Ascending aorta (tissue), 2 donors: ENCODE measurements at regions of chr6 and their contacts with region 1.

Region 1: GRCh38 chr6:139375232-139376016 is 976 bp upstream of the CITED2 start:
- DNase-seq: peak; percentile 46 to 91
- H3K4me3 ChIP-seq: peak overlapping the region; percentile 69 to 75
- H3K27ac ChIP-seq: peak overlapping the region; percentile 92 to 93
- H3K4me1 ChIP-seq: peaks cover 0 to 13% of the 10 kb centered on the region in 2 donors
- H3K27me3 ChIP-seq: no peaks in the 10 kb centered on the region
- CTCF ChIP-seq: peak in 1 of 3 experiments; percentile 20

Region 2: DNA sequence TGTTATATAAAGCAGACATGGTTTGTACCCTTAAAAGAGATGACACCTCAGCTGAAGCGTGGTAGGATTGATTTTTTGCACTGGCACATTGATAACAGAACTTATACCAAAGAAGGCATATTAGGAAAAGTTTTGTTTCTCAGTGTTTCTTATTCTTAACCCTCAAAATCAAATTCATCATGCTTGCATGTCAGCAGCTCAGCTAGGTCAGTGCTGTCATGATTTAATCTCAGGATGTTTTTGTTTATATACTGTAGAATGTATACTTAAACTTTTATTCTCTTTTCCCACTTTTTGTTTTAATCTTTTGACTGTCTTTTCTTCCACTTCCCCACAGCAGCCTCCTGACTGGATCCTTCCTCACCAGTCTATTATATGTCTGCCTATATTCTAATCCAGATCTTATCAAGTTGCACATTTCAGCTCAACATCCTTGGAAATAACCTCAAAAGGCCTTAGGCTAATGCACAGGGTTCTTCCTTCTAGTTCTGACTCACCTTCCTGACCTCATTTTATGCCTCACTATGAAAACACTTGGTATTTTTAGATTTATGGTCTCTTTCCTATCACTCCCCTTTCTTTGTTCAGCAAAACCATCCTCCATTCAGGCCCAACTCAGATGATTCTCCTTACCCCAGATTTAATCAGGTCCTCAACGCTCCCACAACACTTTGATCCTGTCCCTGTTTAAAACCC is 964.3 kb before region 1 on chr6:
- intact Hi-C with region 1: no loop called
- DNase-seq: no peak
- H3K4me3 ChIP-seq: no peak overlapping the region
- H3K27ac ChIP-seq: no peak overlapping the region
- H3K4me1 ChIP-seq: no peaks in the 10 kb centered on the region
- H3K27me3 ChIP-seq: no peaks in the 10 kb centered on the region
- CTCF ChIP-seq: no peak

Region 3: DNA sequence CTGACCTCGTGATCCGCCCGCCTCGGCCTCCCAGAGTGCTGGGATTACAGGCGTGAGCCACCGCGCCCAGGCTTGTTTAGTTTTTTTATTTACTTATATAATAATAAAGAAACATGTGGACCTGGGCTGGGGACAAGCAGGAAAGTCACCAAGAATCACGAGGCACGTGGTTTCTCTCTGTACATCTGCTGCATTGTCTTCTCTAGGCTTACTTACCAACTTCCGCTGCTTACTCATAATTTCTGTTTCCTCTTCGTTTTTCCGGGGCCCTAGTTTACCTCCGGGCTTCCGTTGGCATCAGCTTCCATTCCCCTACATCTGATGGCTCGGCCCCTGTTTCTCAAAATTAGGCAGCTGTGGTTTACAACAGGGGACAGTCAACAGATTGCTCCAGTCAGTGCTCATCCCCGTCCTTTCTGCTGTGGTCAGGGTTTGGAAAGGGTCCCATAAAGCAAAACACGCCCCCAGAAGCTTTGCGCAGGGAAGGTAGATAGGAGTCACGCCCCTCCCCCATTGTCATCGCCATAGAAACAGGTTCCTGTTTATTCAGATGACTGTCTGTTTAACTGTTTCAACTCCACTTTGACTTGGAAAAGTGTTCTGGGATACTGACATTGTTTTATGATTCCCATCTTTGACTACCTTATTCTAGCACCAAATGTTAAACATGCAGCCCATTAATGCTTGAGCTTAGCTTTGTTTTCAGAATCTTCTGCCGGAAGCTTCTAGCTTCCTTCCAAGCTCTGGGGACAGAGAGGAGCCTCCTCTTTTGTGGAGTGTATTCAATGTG is 51.7 kb before region 1 on chr6:
- intact Hi-C with region 1: no loop called
- DNase-seq: peak; percentile 54 to 88
- H3K4me3 ChIP-seq: no peak overlapping the region
- H3K27ac ChIP-seq: peak overlapping the region in 1 of 2 donors; percentile 1
- H3K4me1 ChIP-seq: no peaks in the 10 kb centered on the region
- H3K27me3 ChIP-seq: no peaks in the 10 kb centered on the region
- CTCF ChIP-seq: no peak

Region 4: DNA sequence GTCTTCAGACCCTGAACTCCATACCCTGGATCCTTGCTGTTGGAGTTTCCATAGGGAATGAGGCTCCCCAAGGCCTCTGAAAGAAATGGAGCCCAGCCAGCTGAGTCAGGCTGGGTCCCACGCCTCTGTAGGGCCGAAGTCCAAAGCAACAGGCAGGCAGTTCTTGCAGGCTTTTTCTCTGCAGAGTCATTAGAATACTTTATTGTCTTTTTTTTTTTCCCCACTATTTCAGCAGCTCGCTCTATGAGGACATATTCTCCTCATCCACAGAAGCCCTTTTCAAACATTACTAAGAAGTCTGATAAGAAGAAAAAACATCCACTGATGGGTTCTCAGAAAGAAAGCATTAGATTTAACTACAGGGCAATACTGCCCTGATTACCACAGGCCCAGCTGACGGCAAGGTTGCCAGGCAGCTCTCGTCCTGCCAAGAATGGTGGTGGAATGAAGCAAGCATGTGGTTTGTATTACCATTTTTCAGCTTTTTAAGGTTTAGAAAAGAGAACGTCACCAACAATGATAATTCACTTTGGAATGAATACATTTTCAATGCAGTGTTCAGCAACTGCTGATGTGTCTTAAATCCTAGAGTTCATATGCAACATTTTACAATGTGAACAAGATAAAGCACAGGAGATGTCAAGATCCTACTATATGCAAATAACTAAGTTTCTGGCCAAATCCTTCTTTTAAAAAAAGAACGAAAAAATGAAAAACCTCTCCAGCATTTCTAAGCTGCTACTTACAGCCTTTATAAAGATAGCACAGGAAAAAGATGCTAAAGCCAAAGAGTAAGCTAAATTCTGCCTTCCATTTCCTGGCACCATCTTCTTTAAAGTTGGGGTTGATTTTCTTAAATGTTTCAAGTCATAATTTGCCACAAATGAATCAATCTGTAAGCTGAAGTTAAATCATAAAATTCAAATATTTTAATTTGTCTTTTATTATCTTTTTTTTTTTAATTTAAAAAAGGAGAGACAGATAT is 222.6 kb after region 1 on chr6:
- intact Hi-C with region 1: loop called (anchors 2 kb)
- DNase-seq: peak; percentile 53 to 94
- H3K4me3 ChIP-seq: no peak overlapping the region
- H3K27ac ChIP-seq: peak overlapping the region; percentile 75 to 89
- H3K4me1 ChIP-seq: peaks cover 7 to 41% of the 10 kb centered on the region in 2 donors
- H3K27me3 ChIP-seq: no peaks in the 10 kb centered on the region
- CTCF ChIP-seq: no peak

Region 5: GRCh38 chr6:139764498-139764986 is 389.1 kb after region 1 on chr6:
- intact Hi-C with region 1: loop called (anchors 5 kb)
- DNase-seq: peak in 1 of 2 donors; percentile 71
- H3K4me3 ChIP-seq: peak overlapping the region in 1 of 2 donors; percentile 7
- H3K27ac ChIP-seq: peak overlapping the region; percentile 80 to 83
- H3K4me1 ChIP-seq: peaks cover 3 to 24% of the 10 kb centered on the region in 2 donors
- H3K27me3 ChIP-seq: no peaks in the 10 kb centered on the region
- CTCF ChIP-seq: no peak

Region 6: GRCh38 chr6:139981768-139982181 is 606.4 kb after region 1 on chr6:
- intact Hi-C with region 1: loop called (anchors 5 kb)
- DNase-seq: no peak
- H3K4me3 ChIP-seq: no peak overlapping the region
- H3K27ac ChIP-seq: peak overlapping the region; percentile 28 to 74
- H3K4me1 ChIP-seq: peaks cover 0 to 22% of the 10 kb centered on the region in 2 donors
- H3K27me3 ChIP-seq: no peaks in the 10 kb centered on the region
- CTCF ChIP-seq: no peak

Region 7: DNA sequence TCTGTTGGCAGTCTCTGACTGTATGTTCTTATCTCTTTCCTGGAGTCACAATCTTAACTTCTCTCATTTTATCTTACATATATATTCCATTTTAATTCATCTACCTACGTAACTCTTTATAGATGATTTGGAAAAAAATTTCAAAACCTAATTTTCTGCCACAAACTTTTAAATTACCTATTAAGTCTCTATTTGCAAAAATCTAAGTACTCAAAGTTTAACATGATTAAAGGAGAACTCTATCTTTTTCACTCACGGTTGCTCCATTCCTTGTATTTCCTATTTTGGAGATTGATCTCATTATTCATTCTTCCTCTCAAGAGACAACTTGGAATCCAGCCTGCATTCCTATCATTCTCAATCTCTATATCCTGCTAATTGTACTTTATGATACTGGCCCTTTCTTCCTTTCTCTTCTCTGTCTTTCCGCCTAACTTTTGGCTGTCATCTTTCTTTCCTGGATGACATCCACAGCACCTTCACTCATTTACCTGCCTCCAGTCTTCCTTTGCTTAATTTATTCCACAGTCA is 1070.1 kb after region 1 on chr6:
- intact Hi-C with region 1: loop called (anchors 5 kb)
- DNase-seq: no peak
- H3K4me3 ChIP-seq: no peak overlapping the region
- H3K27ac ChIP-seq: no peak overlapping the region
- H3K4me1 ChIP-seq: peaks cover 0 to 3% of the 10 kb centered on the region in 2 donors
- H3K27me3 ChIP-seq: no peaks in the 10 kb centered on the region
- CTCF ChIP-seq: no peak

Region 8: DNA sequence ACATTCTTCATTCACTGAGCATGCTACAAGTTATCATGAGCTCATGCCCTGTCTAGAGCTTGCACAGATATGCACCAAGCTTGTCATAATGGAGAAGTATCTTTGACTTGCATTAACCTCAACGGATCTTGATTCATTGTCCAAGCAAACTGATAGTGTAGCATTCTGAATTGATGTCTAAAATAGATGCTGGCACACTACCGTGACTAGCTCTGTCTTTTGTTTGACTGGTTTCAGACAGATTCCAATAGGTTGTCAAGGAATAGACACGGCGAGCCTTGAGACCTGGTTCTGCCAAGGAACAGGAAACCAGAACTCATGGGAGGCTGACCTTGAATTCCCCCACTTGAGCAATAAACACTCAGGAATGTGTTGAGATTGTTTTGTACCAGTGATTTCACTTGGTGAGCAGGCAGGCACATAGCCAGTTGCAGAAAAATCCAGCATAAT is 1604.2 kb after region 1 on chr6:
- intact Hi-C with region 1: loop called (anchors 10 kb)
- DNase-seq: peak; percentile 9 to 87
- H3K4me3 ChIP-seq: peak overlapping the region; percentile 13 to 29
- H3K27ac ChIP-seq: peak overlapping the region; percentile 76 to 79
- H3K4me1 ChIP-seq: peaks cover 4 to 24% of the 10 kb centered on the region in 2 donors
- H3K27me3 ChIP-seq: no peaks in the 10 kb centered on the region
- CTCF ChIP-seq: no peak